Activated T-helper 2 cell treated with anti-CD3 and anti-CD28 coated beads, Interferon-gamma antibody, Interleukin-2, Interleukin-4, amounts not matched to agents 10 μg/mL and 5 μg/mL and 100 μg/mL, durations not matched to agents 14 hours and 24 hours and 36 hours (primary cell): ENCODE measurements at regions of chr20 and their contacts with region 1.

Region 1: DNA sequence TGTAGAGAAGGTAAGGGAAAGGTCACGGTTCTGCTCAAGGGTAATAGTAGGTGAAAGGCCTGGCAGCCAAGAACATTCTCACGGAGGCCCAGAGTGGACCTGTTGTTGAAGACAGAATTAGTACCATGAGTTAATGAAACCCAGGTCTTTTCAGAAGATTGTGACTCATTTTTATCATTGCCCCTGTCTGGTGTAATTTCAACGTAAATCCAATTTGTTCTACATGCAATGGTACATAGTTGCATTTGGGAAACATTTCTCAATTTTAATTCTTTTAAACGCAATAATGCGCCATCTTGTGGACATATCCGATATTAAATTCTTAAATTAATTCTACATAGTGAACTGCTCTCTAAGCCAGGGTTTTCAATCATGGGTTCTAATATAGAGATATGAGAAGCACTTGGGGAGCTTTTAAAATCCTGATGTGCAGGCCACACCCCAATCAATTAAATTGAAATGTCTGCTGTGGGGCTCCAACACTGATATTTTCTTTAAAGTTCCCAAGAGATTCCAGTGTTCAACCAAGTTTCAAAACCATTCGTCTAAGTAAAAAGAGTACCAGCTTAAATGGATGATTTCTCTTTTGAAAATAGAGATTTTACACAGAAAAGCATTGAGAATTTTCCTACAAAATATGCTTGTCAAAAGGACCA is 257.4 kb downstream of the PLCB1 start:
- DNase-seq: no peak
- H3K4me3 Mint-ChIP-seq: no peak overlapping the region
- H3K27ac Mint-ChIP-seq: no peak overlapping the region
- H3K4me1 Mint-ChIP-seq: peaks cover 6% of the 10 kb centered on the region
- H3K27me3 Mint-ChIP-seq: peaks cover 21% of the 10 kb centered on the region

Region 2: GRCh38 chr20:8305449-8305978 is 84.0 kb before region 1 on chr20:
- intact Hi-C with region 1: loop called (anchors 10 kb)
- DNase-seq: peak; percentile 53
- H3K4me3 Mint-ChIP-seq: no peak overlapping the region
- H3K27ac Mint-ChIP-seq: no peak overlapping the region
- H3K4me1 Mint-ChIP-seq: peaks cover 7% of the 10 kb centered on the region
- H3K27me3 Mint-ChIP-seq: peaks cover 12% of the 10 kb centered on the region

Region 3: GRCh38 chr20:8722276-8722928 is 332.9 kb after region 1 on chr20:
- intact Hi-C with region 1: loop called (anchors 10 kb)
- DNase-seq: no peak
- H3K4me3 Mint-ChIP-seq: no peak overlapping the region
- H3K27ac Mint-ChIP-seq: no peak overlapping the region
- H3K4me1 Mint-ChIP-seq: no peaks in the 10 kb centered on the region
- H3K27me3 Mint-ChIP-seq: no peaks in the 10 kb centered on the region